Naive thymus-derived CD4-positive, alpha-beta T cell (primary cell): ENCODE measurements at regions of chr11 and their contacts with region 1.

Region 1: GRCh38 chr11:102287964-102288724 is 29.1 kb upstream of the BIRC3 start:
- DNase-seq: peak in 7 of 9 donors; percentile 51 to 73 (median 66)
- ATAC-seq: peak; percentile 86
- H3K4me3 ChIP-seq: no peak overlapping the region
- H3K4me3 Mint-ChIP-seq: peak overlapping the region in 9 of 10 donors; percentile 12 to 73 (median 60)
- H3K27ac ChIP-seq: no peak overlapping the region
- H3K27ac Mint-ChIP-seq: peak overlapping the region in 6 of 9 donors; percentile 15 to 56 (median 38)
- H3K4me1 ChIP-seq: peaks cover 3 to 5% of the 10 kb centered on the region in 2 donors
- H3K4me1 Mint-ChIP-seq: peaks cover 9 to 33% (median 27%) of the 10 kb centered on the region in 7 donors
- H3K27me3 ChIP-seq: no peaks in the 10 kb centered on the region
- H3K27me3 Mint-ChIP-seq: no peaks in the 10 kb centered on the region

Region 2: GRCh38 chr11:102317099-102317767 is 29.1 kb after region 1 on chr11 and contains the start of gene BIRC3:
- CTCF ChIA-PET with region 1: interaction called, 354 read pairs
- POLR2A ChIA-PET with region 1: interaction called, 158 read pairs
- intact Hi-C with region 1: loop called (anchors 1 kb)
- DNase-seq: peak; percentile 77 to 98 (median 93)
- ATAC-seq: peak; percentile 94
- H3K4me3 ChIP-seq: peak within 1 kb of the TSS; percentile 74
- H3K4me3 Mint-ChIP-seq: peak within 1 kb of the TSS; percentile 85 to 98 (median 96)
- H3K27ac ChIP-seq: peak within 1 kb of the TSS; percentile 97
- H3K27ac Mint-ChIP-seq: peak within 1 kb of the TSS; percentile 93 to 99 (median 98)
- H3K4me1 ChIP-seq: peaks cover 43 to 58% of the 10 kb centered on the region in 2 donors
- H3K4me1 Mint-ChIP-seq: peaks cover 44 to 87% (median 74%) of the 10 kb centered on the region in 7 donors
- H3K27me3 ChIP-seq: no peaks in the 10 kb centered on the region
- H3K27me3 Mint-ChIP-seq: peaks cover 0 to 2% (median 0%) of the 10 kb centered on the region in 5 donors
- total RNA-seq, gene BIRC3: 62.3 to 160 (median 128) TPM

Region 3: GRCh38 chr11:102367364-102367763 is 79.2 kb after region 1 on chr11:
- CTCF ChIA-PET with region 1: interaction called, 5 read pairs
- POLR2A ChIA-PET with region 1: no interaction called
- intact Hi-C with region 1: loop called in 1 of 2 experiments (anchors 1 kb)
- DNase-seq: peak in 6 of 9 donors; percentile 33 to 65 (median 56)
- ATAC-seq: peak; percentile 77
- H3K4me3 ChIP-seq: no peak overlapping the region
- H3K4me3 Mint-ChIP-seq: peak overlapping the region in 3 of 10 donors; percentile 4 to 28 (median 19)
- H3K27ac ChIP-seq: no peak overlapping the region
- H3K27ac Mint-ChIP-seq: peak overlapping the region; percentile 16 to 93 (median 83)
- H3K4me1 ChIP-seq: peaks cover 0 to 12% of the 10 kb centered on the region in 2 donors
- H3K4me1 Mint-ChIP-seq: peaks cover 9 to 48% (median 33%) of the 10 kb centered on the region in 7 donors
- H3K27me3 ChIP-seq: no peaks in the 10 kb centered on the region
- H3K27me3 Mint-ChIP-seq: no peaks in the 10 kb centered on the region

Region 4: GRCh38 chr11:102518296-102519094 is 230.4 kb after region 1 on chr11:
- CTCF ChIA-PET with region 1: interaction called, 5 read pairs
- POLR2A ChIA-PET with region 1: no interaction called
- intact Hi-C with region 1: loop called in 1 of 2 experiments (anchors 1 kb)
- DNase-seq: peak in 2 of 9 donors; percentile 3 to 18
- ATAC-seq: no peak
- H3K4me3 ChIP-seq: no peak overlapping the region
- H3K4me3 Mint-ChIP-seq: no peak overlapping the region
- H3K27ac ChIP-seq: no peak overlapping the region
- H3K27ac Mint-ChIP-seq: no peak overlapping the region
- H3K4me1 ChIP-seq: no peaks in the 10 kb centered on the region
- H3K4me1 Mint-ChIP-seq: peaks cover 0 to 7% (median 0%) of the 10 kb centered on the region in 7 donors
- H3K27me3 ChIP-seq: no peaks in the 10 kb centered on the region
- H3K27me3 Mint-ChIP-seq: peaks cover 5 to 30% (median 25%) of the 10 kb centered on the region in 5 donors

Region 5: GRCh38 chr11:102666331-102666957 is 378.3 kb after region 1 on chr11:
- CTCF ChIA-PET with region 1: interaction called, 26 read pairs
- POLR2A ChIA-PET with region 1: no interaction called
- intact Hi-C with region 1: loop called (anchors 1 kb)
- DNase-seq: peak in 7 of 9 donors; percentile 4 to 42 (median 23)
- ATAC-seq: peak; percentile 51
- H3K4me3 ChIP-seq: no peak overlapping the region
- H3K4me3 Mint-ChIP-seq: no peak overlapping the region
- H3K27ac ChIP-seq: no peak overlapping the region
- H3K27ac Mint-ChIP-seq: no peak overlapping the region
- H3K4me1 ChIP-seq: no peaks in the 10 kb centered on the region
- H3K4me1 Mint-ChIP-seq: no peaks in the 10 kb centered on the region
- H3K27me3 ChIP-seq: no peaks in the 10 kb centered on the region
- H3K27me3 Mint-ChIP-seq: peaks cover 0 to 15% (median 6%) of the 10 kb centered on the region in 5 donors